GM12878 (cell line): ENCODE measurements at regions of chr11 and their contacts with region 1.

Region 1: DNA sequence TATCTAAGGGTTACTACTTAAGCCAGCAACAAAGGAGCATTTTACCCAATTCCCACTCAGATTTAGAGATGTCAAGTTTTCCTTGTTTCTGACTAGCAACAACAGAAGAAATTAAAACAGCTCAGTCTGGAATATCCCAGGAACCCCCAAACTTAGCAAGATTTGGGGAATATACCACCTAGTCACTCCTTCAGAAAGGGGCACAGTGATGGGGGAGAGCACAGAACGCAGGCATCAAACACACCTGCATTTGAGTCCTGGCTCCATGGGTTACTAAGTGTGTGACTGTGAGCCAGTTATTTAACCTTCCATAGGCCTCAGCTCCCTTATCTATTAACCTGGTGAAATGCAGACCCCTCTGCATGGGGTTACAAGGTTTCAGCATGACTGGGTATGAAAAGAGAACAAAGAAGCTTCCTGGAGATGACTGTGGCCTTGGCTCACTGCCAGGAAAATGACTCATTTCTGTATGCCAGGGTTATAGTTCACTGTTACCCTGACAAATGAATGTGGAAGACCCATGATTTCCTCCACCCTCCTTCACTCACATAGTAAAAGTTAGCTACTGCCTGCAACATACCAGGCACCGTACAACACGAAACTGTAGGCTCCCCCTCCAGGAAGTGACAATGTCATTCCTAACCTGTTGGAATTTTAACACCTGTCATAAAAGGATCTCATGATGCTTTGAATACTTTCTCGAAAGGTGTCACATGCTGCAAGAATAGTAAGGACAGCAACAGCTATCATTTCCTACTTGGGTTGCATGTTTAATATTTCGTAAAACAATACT is 79.6 kb downstream of the ME3 start:
- DNase-seq: peak; percentile 96
- ATAC-seq: peak; percentile 95
- H3K4me3 ChIP-seq: no peak overlapping the region
- H3K27ac ChIP-seq: peak overlapping the region; percentile 47
- H3K4me1 ChIP-seq: peaks cover 12% of the 10 kb centered on the region
- H3K27me3 ChIP-seq: no peaks in the 10 kb centered on the region
- CTCF ChIP-seq: no peak
- EP300 ChIP-seq: peak; percentile 73 to 94
- POLR2A ChIP-seq: no peak
- RAD21 ChIP-seq: no peak

Region 2: GRCh38 chr11:86483940-86484794 is 108.7 kb before region 1 on chr11:
- CTCF ChIA-PET with region 1: interaction called, 8 read pairs
- POLR2A ChIA-PET with region 1: interaction called, 3 read pairs
- RAD21 ChIA-PET with region 1: interaction called, 23 read pairs
- SMC1A ChIA-PET with region 1: interaction called, 8 read pairs
- in situ Hi-C with region 1: no loop called
- intact Hi-C with region 1: no loop called
- DNase-seq: no peak
- ATAC-seq: no peak
- H3K4me3 ChIP-seq: no peak overlapping the region
- H3K27ac ChIP-seq: no peak overlapping the region
- H3K4me1 ChIP-seq: no peaks in the 10 kb centered on the region
- H3K27me3 ChIP-seq: peaks cover 0 to 2% of the 10 kb centered on the region in 2 experiments; a peak in 1 of 4 replicates
- CTCF ChIP-seq: no peak
- EP300 ChIP-seq: no peak
- POLR2A ChIP-seq: no peak
- RAD21 ChIP-seq: no peak

Region 3: DNA sequence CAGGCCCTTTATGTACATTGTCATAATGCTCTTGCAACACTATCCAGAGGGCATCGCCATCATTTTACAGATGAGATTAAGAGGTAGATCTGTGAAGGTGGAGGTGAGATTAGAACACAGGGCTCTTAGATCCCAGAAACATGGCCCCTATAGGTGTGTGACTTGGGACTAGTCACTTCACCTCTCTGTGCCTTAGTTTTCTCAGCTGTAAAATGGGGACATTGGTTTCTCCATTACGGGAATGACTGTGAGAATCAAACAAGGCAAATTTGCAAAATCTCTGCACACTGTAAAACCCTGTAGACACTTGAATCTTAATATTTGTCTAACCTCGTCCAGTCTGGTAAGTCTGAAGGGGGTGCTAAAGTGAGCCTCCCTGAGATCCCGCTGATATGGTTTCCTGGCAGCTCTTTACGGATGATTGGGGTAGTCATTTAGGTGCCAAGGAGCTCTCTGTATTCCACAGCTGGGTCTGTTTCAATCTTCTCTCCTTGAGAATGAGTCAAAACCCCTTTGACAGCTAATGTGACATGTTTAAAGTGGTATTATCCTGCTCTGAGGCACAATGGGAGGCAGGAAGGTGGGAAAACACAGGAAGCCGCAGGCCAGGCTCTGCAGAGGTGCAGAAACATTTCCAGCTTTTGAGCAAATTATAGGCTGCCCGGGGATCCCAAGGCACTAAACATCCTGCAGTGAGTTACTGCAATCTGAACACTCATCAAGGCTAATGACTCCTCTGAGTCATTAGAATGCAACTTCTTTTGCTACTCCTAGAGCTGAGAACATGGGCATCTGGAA is 77.4 kb before region 1 on chr11:
- CTCF ChIA-PET with region 1: interaction called, 7 read pairs
- POLR2A ChIA-PET with region 1: interaction called, 5 read pairs
- RAD21 ChIA-PET with region 1: interaction called, 17 read pairs
- SMC1A ChIA-PET with region 1: interaction called, 7 read pairs
- in situ Hi-C with region 1: no loop called
- intact Hi-C with region 1: no loop called
- DNase-seq: no peak
- ATAC-seq: no peak
- H3K4me3 ChIP-seq: no peak overlapping the region
- H3K27ac ChIP-seq: no peak overlapping the region
- H3K4me1 ChIP-seq: no peaks in the 10 kb centered on the region
- H3K27me3 ChIP-seq: peaks cover 0 to 1% of the 10 kb centered on the region in 2 experiments; a peak in 1 of 4 replicates
- CTCF ChIP-seq: no peak
- EP300 ChIP-seq: no peak
- POLR2A ChIP-seq: no peak
- RAD21 ChIP-seq: no peak

Region 4: GRCh38 chr11:86551286-86552092 is 41.4 kb before region 1 on chr11:
- CTCF ChIA-PET with region 1: interaction called, 3 read pairs
- POLR2A ChIA-PET with region 1: no interaction called
- RAD21 ChIA-PET with region 1: interaction called, 3 read pairs
- SMC1A ChIA-PET with region 1: interaction called, 12 read pairs
- in situ Hi-C with region 1: no loop called
- intact Hi-C with region 1: no loop called
- DNase-seq: peak; percentile 1
- ATAC-seq: peak; percentile 84
- H3K4me3 ChIP-seq: no peak overlapping the region
- H3K27ac ChIP-seq: no peak overlapping the region
- H3K4me1 ChIP-seq: no peaks in the 10 kb centered on the region
- H3K27me3 ChIP-seq: no peaks in the 10 kb centered on the region; a peak in 1 of 4 replicates
- CTCF ChIP-seq: no peak
- EP300 ChIP-seq: no peak
- POLR2A ChIP-seq: no peak
- RAD21 ChIP-seq: no peak

Region 5: DNA sequence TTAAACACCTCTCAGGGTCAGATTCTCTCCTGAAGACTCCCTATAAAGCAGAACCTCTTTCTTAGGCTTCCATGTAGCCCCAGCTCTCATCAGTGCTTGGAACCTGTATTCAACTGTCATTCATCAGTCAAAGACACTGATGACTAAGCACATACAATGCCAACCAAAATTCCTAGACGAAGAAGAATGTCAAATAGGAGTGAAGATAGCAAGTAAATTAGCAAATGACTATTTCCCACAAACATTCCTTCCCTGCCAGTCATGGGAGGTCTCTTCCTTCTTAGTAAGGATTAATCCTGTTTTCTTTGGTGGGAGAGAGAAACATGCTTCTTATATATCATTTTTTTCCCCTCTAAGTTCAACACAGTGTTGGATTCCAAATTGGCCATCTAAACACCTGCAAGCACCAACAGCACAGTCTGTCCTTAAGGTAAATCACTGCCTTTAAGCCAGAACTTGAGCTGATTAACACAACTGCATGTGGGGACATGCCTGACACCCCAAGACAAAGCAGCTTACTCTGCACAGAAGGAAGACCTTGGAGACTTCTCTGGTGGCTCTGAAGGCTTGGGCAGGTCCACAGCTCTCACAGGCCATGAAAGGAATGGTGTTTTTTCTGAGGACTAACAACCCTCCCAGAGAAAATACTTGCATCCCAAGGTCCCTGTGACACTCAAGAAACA is 127.1 kb after region 1 on chr11:
- CTCF ChIA-PET with region 1: no interaction called
- POLR2A ChIA-PET with region 1: no interaction called
- RAD21 ChIA-PET with region 1: no interaction called
- SMC1A ChIA-PET with region 1: no interaction called
- in situ Hi-C with region 1: no loop called
- intact Hi-C with region 1: no loop called
- DNase-seq: no peak
- ATAC-seq: no peak
- H3K4me3 ChIP-seq: no peak overlapping the region
- H3K27ac ChIP-seq: no peak overlapping the region
- H3K4me1 ChIP-seq: no peaks in the 10 kb centered on the region
- H3K27me3 ChIP-seq: no peaks in the 10 kb centered on the region
- CTCF ChIP-seq: no peak
- EP300 ChIP-seq: no peak
- POLR2A ChIP-seq: no peak
- RAD21 ChIP-seq: no peak